Common myeloid progenitor, CD34-positive (primary cell): ENCODE measurements at regions of chr9 and their contacts with region 1.

Region 1: DNA sequence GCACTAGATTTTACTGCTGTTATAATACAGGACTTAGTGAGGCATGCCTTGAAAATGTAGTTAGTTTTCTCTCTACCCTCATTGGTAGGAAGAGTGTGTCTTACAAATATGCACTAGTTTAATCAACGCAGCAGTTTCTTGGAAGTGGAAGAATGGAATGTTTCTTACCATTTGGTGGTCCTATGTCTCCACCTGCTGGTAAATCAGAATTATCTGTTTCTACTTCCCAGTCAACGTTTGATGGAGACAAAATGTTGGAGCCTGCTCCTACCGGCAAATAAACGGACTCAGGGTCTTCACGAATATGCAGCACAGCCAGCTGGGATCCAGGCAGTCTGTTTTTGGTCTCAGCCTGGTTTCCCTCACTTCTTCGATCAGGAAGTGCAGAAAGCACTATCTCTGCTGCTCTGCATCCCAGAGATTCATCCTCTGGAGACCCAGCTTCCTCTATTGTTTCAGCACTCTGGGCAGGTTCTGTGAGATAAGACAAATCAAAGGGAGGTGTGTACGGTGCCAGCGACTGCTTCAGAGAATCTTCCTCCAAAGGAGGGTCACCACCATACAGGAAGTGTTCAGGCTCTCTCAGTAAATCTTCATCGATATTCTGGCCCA is 59.5 kb upstream of the PCA3 start:
- DNase-seq: peak; percentile 88 to 92 (median 88)
- H3K4me3 ChIP-seq: peak overlapping the region in 1 of 7 experiments; percentile 43
- H3K27ac ChIP-seq: no peak overlapping the region
- H3K4me1 ChIP-seq: peaks cover 0 to 5% (median 2%) of the 10 kb centered on the region in 4 experiments
- H3K27me3 ChIP-seq: peaks cover 0 to 11% (median 5%) of the 10 kb centered on the region in 5 experiments

Region 2: GRCh38 chr9:76302947-76303940 is 401.5 kb before region 1 on chr9:
- CTCF ChIA-PET with region 1: interaction called, 13 read pairs
- POLR2A ChIA-PET with region 1: no interaction called
- DNase-seq: peak; percentile 59 to 79 (median 77)
- H3K4me3 ChIP-seq: no peak overlapping the region
- H3K27ac ChIP-seq: no peak overlapping the region
- H3K4me1 ChIP-seq: no peaks in the 10 kb centered on the region
- H3K27me3 ChIP-seq: no peaks in the 10 kb centered on the region

Region 3: GRCh38 chr9:76445976-76446375 is 258.7 kb before region 1 on chr9:
- CTCF ChIA-PET with region 1: interaction called, 75 read pairs
- POLR2A ChIA-PET with region 1: interaction called, 3 read pairs
- DNase-seq: no peak
- H3K4me3 ChIP-seq: no peak overlapping the region
- H3K27ac ChIP-seq: no peak overlapping the region
- H3K4me1 ChIP-seq: peaks cover 0 to 9% (median 3%) of the 10 kb centered on the region in 4 experiments
- H3K27me3 ChIP-seq: no peaks in the 10 kb centered on the region

Region 4: DNA sequence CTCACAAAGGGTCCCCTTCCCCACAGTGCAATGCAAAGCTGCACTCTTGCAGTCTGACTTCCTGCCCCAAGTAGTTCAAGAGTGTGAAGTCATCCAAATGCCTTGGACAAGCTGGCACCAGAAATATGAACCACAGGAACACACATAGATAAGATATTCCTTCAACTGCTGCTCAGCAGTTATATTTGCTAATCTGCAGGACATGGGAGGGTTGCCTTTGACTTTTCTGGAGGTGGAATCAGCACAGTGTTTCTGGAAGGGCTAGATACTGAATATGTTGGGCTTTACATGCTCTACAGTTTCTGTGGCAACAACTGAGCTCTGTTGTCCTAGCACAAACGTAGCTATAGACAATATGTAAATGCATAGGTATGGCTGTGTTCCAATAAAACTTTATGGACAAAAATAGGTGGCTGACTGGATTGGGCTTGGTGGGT is 37.2 kb before region 1 on chr9:
- CTCF ChIA-PET with region 1: interaction called, 28 read pairs
- POLR2A ChIA-PET with region 1: no interaction called
- DNase-seq: peak in 2 of 3 donors; percentile 75 to 91
- H3K4me3 ChIP-seq: no peak overlapping the region
- H3K27ac ChIP-seq: peak overlapping the region in 1 of 2 experiments; percentile 37
- H3K4me1 ChIP-seq: peaks cover 5 to 14% (median 14%) of the 10 kb centered on the region in 4 experiments
- H3K27me3 ChIP-seq: no peaks in the 10 kb centered on the region

Region 5: DNA sequence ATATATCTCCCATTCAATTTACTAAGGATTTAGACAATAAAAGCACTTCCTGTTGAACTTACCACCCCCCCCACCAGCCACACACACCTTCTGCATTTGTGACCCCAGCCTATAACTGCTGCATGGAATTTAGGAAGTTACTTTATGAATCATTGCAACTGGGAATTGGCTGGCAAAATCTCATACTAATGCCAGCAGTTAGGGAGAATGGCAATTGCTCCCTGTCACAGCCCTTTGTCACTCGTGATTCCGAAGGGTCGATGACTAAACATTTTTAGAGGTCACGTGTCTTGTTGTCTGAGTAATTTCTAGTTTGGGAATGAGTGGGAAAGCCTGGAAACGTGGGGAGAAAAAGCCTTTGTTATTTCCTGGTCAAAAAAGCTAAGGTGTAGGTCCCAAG is 12.9 kb after region 1 on chr9:
- CTCF ChIA-PET with region 1: interaction called, 11 read pairs
- POLR2A ChIA-PET with region 1: no interaction called
- DNase-seq: peak; percentile 41 to 81 (median 62)
- H3K4me3 ChIP-seq: no peak overlapping the region
- H3K27ac ChIP-seq: no peak overlapping the region
- H3K4me1 ChIP-seq: peaks cover 0 to 11% (median 5%) of the 10 kb centered on the region in 4 experiments
- H3K27me3 ChIP-seq: no peaks in the 10 kb centered on the region